Endothelial cell of umbilical vein (primary cell): ENCODE measurements at regions of chr5 and their contacts with region 1.

Region 1: GRCh38 chr5:37554938-37555337 is 175.8 kb downstream of the WDR70 start:
- DNase-seq: peak; percentile 22
- H3K4me3 ChIP-seq: no peak overlapping the region
- H3K27ac ChIP-seq: no peak overlapping the region
- H3K4me1 ChIP-seq: peaks cover 24% of the 10 kb centered on the region
- H3K27me3 ChIP-seq: no peaks in the 10 kb centered on the region
- CTCF ChIP-seq: peak; percentile 18 to 27
- POLR2A ChIP-seq: no peak

Region 2: DNA sequence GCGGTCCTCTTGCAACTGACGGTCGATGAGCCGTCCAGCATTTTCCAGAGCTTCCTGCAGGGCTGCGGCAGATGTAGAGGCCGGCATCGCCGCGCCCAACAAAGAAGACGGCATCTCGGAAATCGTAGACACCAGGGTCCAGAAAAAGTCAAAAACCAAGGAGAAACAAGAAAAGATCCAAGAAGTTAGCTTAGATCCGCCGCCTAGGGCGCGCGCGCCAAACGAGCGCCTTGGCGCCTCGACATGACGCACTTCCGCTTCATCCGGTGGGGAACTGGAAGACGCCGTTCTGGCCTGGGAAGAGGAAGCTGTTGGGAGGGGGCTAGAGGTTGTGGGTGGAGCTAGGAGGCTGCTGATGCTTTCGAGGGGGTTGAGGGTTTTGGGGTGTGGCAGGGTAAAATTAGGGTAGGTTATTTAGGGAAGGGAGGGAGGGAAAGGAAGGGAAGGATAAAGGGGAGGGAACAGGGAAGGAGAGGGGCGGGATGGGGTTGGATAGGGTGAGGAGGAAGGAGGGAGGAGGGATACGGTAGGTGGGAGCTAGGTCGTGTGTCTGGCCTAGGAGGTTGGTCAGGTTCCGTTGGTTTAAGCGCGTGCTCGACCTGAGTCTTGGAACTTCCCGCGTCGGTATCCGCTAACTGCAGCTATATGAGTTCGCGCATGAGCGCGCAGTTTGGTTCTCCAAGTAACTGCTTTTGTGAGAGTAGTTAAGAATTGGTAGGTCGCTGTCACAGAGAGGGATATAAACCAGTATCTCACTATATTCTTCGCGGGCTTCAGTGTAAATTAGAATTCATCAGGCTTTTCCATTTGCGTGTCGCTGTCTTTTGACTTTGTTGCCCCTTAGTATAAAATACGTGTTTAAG is 183.8 kb before region 1 on chr5 and contains the start of gene NUP155:
- CTCF ChIA-PET with region 1: interaction called, 3 read pairs
- POLR2A ChIA-PET with region 1: no interaction called
- dilution Hi-C with region 1: no loop called
- intact Hi-C with region 1: loop called (anchors 2 kb)
- DNase-seq: peak; percentile 94
- H3K4me3 ChIP-seq: peak within 1 kb of the TSS; percentile 72 to 97 (median 88)
- H3K27ac ChIP-seq: peak within 1 kb of the TSS; percentile 97
- H3K4me1 ChIP-seq: peaks cover 16% of the 10 kb centered on the region
- H3K27me3 ChIP-seq: no peaks in the 10 kb centered on the region
- CTCF ChIP-seq: no peak
- POLR2A ChIP-seq: peak; percentile 86
- total RNA-seq, gene NUP155: 35.5 and 36.6 TPM in 2 replicates

Region 3: GRCh38 chr5:37533851-37534250 is 21.1 kb before region 1 on chr5:
- CTCF ChIA-PET with region 1: interaction called, 3 read pairs
- POLR2A ChIA-PET with region 1: no interaction called
- dilution Hi-C with region 1: no loop called
- intact Hi-C with region 1: loop called (anchors 1 kb)
- DNase-seq: no peak
- H3K4me3 ChIP-seq: no peak overlapping the region
- H3K27ac ChIP-seq: no peak overlapping the region
- H3K4me1 ChIP-seq: no peaks in the 10 kb centered on the region
- H3K27me3 ChIP-seq: no peaks in the 10 kb centered on the region
- CTCF ChIP-seq: no peak
- POLR2A ChIP-seq: no peak

Region 4: DNA sequence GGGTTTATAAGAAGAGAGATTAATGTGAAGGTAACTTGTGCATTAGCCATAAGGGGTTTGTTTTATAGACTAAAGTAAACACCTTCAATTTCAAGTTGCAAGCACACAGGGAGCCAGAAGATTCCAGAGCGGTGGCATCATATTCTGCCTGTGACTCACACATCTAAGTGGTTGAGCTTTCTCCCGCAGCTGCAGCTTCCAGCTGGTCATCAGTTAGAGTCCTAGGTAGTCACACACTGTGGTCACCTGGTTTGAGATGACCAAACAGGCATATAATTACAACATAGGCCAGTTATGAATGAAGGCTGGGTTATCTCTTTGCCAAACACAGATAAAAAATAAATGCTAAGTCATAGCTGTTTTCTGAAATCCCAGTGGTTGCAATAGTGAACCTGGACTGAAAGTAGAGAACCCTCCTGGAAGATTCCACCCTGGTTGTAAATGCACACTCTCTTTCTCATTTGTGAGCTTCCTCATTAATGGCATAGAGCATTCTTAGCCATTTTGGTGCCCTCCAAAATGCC is 113.6 kb after region 1 on chr5:
- CTCF ChIA-PET with region 1: no interaction called
- POLR2A ChIA-PET with region 1: interaction called, 5 read pairs
- dilution Hi-C with region 1: no loop called
- intact Hi-C with region 1: loop called (anchors 2 kb)
- DNase-seq: peak; percentile 88
- H3K4me3 ChIP-seq: no peak overlapping the region
- H3K27ac ChIP-seq: peak overlapping the region; percentile 41
- H3K4me1 ChIP-seq: peaks cover 19% of the 10 kb centered on the region
- H3K27me3 ChIP-seq: no peaks in the 10 kb centered on the region
- CTCF ChIP-seq: no peak
- POLR2A ChIP-seq: no peak

Region 5: GRCh38 chr5:37738057-37738691 is 183.2 kb after region 1 on chr5:
- CTCF ChIA-PET with region 1: interaction called, 3 read pairs
- POLR2A ChIA-PET with region 1: no interaction called
- dilution Hi-C with region 1: no loop called
- intact Hi-C with region 1: loop called (anchors 1 kb)
- DNase-seq: peak; percentile 95
- H3K4me3 ChIP-seq: no peak overlapping the region
- H3K27ac ChIP-seq: peak overlapping the region; percentile 42
- H3K4me1 ChIP-seq: peaks cover 19% of the 10 kb centered on the region
- H3K27me3 ChIP-seq: no peaks in the 10 kb centered on the region
- CTCF ChIP-seq: no peak
- POLR2A ChIP-seq: no peak